ENCODE measurements at regions of chr1 and their contacts with region 1.

Region 1: DNA sequence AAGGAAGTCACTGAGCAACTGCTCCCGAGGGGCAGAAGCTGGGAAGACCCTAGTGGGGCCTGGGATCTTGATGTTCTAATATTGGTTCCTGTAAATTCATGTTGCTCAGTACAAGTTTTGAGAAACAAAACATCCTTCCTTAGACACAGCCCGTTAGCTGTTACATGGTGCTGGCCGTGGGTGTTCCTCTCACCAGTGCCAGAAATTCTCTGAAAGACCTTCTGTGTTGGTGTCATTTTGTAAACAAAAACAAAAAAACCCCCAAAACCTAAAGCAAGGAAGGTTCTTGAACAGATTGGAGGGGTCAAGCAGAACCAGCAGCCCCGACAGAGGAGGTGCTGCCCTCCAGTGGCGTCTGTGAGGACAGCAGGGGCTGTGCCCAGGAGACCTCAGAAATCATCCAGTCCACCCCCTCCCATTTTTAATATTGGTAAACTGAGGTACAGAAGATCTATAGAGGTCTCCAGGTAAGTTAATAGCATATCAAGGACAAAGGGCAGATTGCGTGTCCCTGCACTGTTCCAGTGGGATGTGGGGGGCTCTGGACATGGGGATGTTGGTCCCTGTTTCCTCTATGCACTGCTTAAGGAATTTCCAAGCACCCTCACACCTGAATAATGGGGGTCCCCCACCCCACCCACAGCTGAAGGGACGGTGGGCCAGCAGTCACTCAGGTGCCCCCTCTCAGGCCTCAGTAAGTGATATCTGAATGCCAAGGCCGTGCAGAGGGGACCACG is 38.2 kb downstream of the SLC2A7 start:
- DNase-seq: peak; percentile 85
- H3K4me3 Mint-ChIP-seq: peak overlapping the region; percentile 41
- H3K27ac Mint-ChIP-seq: peak overlapping the region; percentile 84
- H3K4me1 Mint-ChIP-seq: peaks cover 43% of the 10 kb centered on the region
- H3K27me3 Mint-ChIP-seq: no peaks in the 10 kb centered on the region

Region 2: DNA sequence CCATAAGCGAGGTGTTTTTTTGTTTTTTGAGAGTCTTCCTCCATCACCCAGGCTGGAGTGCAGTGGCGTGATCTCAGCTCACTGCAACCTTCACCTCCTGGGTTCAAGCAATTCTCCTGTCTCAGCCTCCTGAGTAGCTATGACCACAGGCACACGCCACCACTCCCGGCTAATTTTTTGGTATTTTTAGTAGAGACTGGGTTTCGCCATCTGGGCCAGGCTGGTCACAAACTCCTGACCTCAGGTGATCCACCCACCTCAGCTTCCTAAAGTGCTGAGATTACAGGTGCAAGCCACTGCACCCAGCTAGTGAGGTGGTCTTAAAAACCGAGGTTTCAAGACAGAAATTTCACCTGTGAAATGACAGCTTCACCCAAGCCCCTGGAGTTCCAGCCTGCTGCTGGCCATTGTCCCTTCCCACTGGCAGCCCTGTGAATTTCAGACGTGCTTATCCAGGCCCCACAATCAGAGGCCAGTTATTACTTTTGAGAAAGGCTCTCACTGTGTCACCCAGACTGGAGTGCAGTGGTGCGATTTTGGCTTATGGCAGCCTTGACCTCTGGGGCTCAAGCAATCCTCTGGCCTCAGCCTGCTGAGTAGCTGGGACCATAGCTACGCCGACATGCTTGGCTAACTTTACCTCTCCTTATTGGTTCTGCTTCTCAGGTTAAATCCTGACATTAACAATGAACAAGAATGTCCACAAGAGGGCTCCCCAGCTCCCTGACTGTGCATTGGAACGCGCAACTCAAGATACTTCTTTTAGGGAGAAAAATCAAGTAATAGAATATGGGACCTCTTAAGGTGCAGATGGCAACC is 129.0 kb before region 1 on chr1:
- CTCF ChIA-PET with region 1: interaction called, 3 read pairs
- intact Hi-C with region 1: loop called (anchors 5 kb)
- DNase-seq: peak; percentile 78
- H3K4me3 Mint-ChIP-seq: no peak overlapping the region
- H3K27ac Mint-ChIP-seq: peak overlapping the region; percentile 83
- H3K4me1 Mint-ChIP-seq: peaks cover 25% of the 10 kb centered on the region
- H3K27me3 Mint-ChIP-seq: no peaks in the 10 kb centered on the region

Region 3: DNA sequence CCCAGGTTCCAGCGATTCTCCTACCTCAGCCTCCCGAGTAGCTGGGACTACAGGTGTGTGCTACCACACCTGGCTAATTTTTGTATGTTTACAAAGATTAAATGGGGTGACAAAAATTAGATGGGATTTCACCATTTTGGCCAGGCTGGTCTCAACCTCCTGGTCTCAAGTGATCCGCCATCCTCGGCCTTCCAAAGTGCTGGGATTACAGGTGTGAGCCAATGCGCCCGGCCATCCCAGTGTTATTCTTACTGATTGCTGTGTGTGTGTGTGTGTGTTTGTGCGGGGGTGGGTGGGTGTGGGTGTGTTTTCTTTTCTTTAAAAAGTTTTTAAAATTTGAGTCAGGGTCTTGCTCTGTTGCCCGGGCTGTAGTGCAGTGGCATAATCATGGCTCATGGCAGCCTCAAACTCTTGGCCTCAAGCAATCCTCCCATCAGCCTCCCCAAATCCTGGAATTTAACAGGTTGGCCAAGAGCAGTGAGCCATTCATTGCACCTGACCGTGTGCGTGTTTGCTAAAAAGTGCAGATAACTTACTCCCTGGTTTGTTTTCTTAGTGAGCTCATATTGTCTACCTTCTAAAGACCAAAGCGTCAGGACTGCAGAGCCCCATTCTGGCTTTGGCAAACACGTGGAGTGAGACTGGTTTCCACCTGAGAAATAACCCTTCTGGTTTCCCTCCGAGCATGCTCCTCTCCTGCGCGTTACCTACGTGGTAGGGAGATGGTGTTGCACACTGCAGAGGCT is 74.8 kb before region 1 on chr1:
- CTCF ChIA-PET with region 1: interaction called, 141 read pairs
- intact Hi-C with region 1: loop called (anchors 2 kb)
- DNase-seq: no peak
- H3K4me3 Mint-ChIP-seq: no peak overlapping the region
- H3K27ac Mint-ChIP-seq: no peak overlapping the region
- H3K4me1 Mint-ChIP-seq: peaks cover 6% of the 10 kb centered on the region
- H3K27me3 Mint-ChIP-seq: no peaks in the 10 kb centered on the region

Region 4: DNA sequence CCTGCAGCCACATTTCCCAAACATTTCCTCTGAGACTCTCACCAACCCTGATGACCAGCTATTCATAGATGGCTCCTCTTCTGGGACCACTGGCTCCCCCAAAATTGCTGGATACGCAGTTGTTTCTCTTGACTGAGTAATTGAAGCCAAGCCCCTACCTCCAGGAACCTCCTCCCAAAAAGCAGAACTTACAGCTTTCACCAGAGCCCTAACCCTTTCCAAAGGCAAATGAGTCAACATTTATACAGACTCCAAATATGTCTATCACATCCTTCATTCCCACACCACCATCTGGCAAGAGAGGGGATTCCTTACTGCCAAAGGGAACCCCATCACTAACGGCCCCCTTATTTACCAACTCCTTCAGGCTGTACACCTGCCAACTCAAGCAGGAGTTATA is 62.6 kb before region 1 on chr1:
- CTCF ChIA-PET with region 1: interaction called, 141 read pairs
- intact Hi-C with region 1: no loop called
- DNase-seq: no peak
- H3K4me3 Mint-ChIP-seq: no peak overlapping the region
- H3K27ac Mint-ChIP-seq: no peak overlapping the region
- H3K4me1 Mint-ChIP-seq: peaks cover 31% of the 10 kb centered on the region
- H3K27me3 Mint-ChIP-seq: no peaks in the 10 kb centered on the region

Region 5: DNA sequence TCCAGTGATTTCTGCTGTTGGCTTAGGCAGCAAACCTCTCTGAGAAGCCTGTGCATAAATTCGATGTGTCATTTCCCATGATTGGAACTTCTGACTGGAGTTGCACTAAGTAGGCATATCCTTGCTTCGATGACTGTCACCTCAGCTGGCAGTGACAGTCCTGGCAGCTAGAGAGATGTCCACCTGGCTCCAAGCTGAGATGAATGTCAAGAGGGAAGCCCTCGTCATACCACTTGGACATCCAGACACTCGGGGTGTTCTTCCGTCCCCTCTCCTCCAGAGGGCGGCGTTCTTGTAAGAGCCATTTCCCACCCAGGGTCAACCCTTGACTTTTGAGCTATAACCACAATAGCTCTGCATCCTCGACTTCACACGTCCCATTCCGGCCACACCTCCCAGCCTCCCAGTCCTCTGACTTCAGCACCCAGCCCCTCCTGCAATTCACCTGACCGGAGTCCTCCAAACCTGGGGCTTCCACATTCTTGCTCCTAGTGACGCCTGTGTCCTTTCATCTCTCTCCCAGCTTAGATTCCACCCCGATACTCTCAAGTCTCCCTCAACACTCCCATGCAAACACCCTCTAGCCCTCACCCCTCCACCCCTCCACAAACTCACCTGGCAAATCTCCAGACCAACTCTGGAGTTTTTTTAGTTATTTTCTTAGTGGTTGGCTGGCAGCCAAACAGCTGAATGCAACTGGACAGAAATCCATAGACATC is 25.1 kb before region 1 on chr1:
- CTCF ChIA-PET with region 1: interaction called, 23 read pairs
- intact Hi-C with region 1: no loop called
- DNase-seq: peak; percentile 66
- H3K4me3 Mint-ChIP-seq: peak overlapping the region; percentile 39
- H3K27ac Mint-ChIP-seq: peak overlapping the region; percentile 84
- H3K4me1 Mint-ChIP-seq: peaks cover 87% of the 10 kb centered on the region
- H3K27me3 Mint-ChIP-seq: no peaks in the 10 kb centered on the region

Region 6: GRCh38 chr1:8970870-8971337 is 17.1 kb before region 1 on chr1:
- CTCF ChIA-PET with region 1: interaction called, 12 read pairs
- intact Hi-C with region 1: loop called (anchors 1 kb)
- DNase-seq: peak; percentile 81
- H3K4me3 Mint-ChIP-seq: peak overlapping the region; percentile 96
- H3K27ac Mint-ChIP-seq: peak overlapping the region; percentile 94
- H3K4me1 Mint-ChIP-seq: peaks cover 35% of the 10 kb centered on the region
- H3K27me3 Mint-ChIP-seq: no peaks in the 10 kb centered on the region

Region 7: DNA sequence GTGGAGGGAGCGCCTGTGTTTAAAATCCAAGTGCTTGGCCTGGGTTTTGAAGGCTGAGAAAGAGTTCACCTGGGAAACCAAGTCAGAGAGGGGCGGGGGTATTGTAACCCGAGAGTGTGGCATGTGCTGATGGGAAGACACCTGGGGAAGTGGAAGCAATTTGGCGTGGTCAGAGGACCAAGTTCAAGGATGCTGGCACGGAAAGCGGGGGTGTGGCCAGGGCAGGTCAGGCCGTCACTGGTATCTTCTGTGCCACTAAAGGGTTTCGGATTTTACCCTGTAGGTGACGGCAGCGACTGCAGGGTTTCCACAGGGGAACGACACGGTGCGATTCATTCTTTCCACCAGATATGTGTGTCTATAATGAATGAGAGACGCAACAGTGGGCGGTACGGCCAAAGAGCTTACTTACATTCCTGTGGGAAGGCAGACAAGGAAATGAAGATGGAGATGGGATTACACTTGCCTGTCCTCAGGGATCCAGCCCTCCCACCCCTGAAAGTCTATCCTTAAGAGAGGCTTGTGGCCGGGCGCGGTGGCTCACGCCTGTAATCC is 11.1 kb before region 1 on chr1:
- CTCF ChIA-PET with region 1: interaction called, 12 read pairs
- intact Hi-C with region 1: no loop called
- DNase-seq: no peak
- H3K4me3 Mint-ChIP-seq: no peak overlapping the region
- H3K27ac Mint-ChIP-seq: no peak overlapping the region
- H3K4me1 Mint-ChIP-seq: peaks cover 5% of the 10 kb centered on the region
- H3K27me3 Mint-ChIP-seq: no peaks in the 10 kb centered on the region

Region 8: DNA sequence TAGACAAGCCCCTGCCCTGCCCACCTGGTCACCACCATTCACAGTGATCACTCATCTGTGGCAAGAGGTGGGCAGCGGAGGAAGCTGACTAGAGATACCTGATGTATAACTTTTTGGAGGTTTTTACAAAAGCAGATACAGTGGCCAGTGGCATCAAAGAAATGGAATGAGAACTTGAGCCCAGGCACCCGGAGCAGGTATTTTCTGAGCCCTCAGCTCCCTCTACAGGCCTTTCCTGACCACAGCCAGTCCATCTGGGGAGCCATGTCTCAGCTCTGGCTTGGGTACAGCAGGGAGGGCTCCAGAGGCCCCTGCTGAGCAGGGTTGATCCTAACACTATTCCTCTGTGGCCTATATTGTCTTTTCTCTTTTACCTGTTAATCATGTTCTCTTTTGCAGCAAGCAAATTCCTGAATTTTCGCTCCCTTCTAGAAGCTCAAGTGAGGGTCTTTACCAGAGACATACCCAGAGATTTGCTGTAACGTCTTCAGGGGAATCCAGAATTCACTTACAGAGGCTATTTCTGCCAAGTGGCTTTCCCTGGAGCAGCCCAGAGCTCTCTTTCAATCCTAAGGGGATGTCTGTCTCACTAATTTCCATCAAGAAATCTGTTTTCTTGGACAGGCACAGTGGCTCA is 113.6 kb after region 1 on chr1:
- CTCF ChIA-PET with region 1: no interaction called
- intact Hi-C with region 1: no loop called
- DNase-seq: peak; percentile 62
- H3K4me3 Mint-ChIP-seq: no peak overlapping the region
- H3K27ac Mint-ChIP-seq: no peak overlapping the region
- H3K4me1 Mint-ChIP-seq: no peaks in the 10 kb centered on the region
- H3K27me3 Mint-ChIP-seq: no peaks in the 10 kb centered on the region